ENCODE measurements at regions of chr6 and their contacts with region 1.

Region 1: DNA sequence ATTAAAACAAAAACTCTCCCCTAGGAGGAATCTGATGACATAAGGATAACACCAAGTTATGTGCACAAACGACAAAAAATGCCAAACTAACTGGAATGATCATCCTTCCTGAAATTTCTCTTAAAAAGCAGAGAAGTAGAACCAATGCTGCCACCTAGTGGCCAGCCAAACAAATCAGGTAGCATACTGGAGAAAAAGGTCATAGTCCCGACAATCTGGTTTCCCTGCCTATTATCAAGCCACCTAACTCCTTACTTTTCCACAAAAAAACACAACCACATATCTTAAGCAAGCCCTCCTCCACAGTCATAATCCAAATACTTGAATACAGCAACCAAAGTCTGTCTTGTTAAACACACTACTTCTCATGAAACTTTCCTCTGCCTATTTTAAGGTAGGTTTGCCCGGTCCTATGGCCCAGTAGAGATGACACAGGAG is 5.3 kb downstream of the OARD1 start:
- DNase-seq: peak; percentile 26
- H3K4me3 Mint-ChIP-seq: no peak overlapping the region
- H3K27ac Mint-ChIP-seq: no peak overlapping the region
- H3K4me1 Mint-ChIP-seq: peaks cover 37% of the 10 kb centered on the region
- H3K27me3 Mint-ChIP-seq: no peaks in the 10 kb centered on the region

Region 2: GRCh38 chr6:41002216-41002615 is 64.7 kb before region 1 on chr6:
- intact Hi-C with region 1: loop called (anchors 1 kb)
- DNase-seq: no peak
- H3K4me3 Mint-ChIP-seq: no peak overlapping the region
- H3K27ac Mint-ChIP-seq: no peak overlapping the region
- H3K4me1 Mint-ChIP-seq: peaks cover 2% of the 10 kb centered on the region
- H3K27me3 Mint-ChIP-seq: peaks cover 44% of the 10 kb centered on the region

Region 3: DNA sequence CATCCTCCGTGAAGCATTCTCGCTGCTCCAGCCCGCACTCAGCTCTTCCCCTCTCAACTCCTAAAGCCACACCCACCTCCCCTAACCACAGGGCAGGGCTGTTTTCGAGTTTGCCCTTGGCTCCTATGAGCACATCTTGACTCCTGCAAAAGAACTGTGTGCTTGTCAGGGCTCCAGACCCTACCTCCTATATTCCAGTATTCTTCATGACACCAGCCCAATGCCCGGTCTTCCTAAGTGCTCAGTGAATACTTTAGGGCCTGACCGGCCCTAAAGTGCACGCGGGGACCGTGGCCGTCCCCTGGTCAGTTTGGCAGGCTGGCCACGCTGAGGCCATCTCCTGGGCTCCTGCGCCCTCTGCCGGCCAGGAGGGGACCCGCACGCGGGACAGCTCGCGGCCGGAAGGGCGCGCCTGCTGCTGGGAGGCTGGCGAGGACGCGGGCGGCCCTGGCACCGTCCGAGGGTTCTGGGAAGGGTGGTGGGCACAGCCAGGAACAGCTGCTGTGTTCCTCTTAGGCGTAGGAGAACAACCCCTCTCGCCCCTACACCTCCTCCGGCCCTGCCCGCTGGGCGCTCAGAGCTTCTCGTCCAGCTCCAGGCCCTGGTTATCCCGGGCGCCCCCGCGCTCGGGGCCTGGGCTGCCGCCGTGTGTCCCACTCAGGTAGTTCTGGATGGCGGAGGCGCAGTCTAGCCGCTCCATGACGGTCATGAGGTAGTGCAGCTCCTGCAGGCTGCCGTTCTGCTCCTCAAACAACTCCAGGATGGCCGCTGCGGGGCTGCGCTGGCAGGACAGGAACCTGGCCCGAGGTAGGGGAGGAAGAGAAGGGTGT is 38.9 kb before region 1 on chr6:
- intact Hi-C with region 1: loop called (anchors 1 kb)
- DNase-seq: peak; percentile 77
- H3K4me3 Mint-ChIP-seq: peak overlapping the region; percentile 89
- H3K27ac Mint-ChIP-seq: peak overlapping the region; percentile 94
- H3K4me1 Mint-ChIP-seq: peaks cover 19% of the 10 kb centered on the region
- H3K27me3 Mint-ChIP-seq: no peaks in the 10 kb centered on the region

Region 4: DNA sequence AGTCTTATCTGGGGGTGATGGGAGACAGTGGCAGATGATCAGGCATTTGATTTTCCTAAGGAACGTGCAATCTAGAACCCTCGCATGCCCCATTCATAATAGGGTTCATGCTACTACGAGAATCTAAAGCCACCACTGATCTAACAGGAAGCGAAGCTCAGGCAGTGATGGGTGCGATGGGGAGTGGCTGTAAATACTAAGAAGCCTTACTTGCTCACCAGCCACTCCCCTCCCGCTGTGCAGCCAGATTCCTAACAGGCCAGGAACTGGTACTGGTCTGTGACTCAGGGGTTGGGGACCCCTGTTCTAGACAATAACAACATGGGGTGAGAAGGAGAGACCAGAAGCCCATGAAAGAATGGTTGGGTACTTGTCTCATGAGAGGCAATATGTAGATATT is 165.8 kb after region 1 on chr6:
- intact Hi-C with region 1: no loop called
- DNase-seq: no peak
- H3K4me3 Mint-ChIP-seq: no peak overlapping the region
- H3K27ac Mint-ChIP-seq: no peak overlapping the region
- H3K4me1 Mint-ChIP-seq: no peaks in the 10 kb centered on the region
- H3K27me3 Mint-ChIP-seq: peaks cover 29% of the 10 kb centered on the region

Region 5: DNA sequence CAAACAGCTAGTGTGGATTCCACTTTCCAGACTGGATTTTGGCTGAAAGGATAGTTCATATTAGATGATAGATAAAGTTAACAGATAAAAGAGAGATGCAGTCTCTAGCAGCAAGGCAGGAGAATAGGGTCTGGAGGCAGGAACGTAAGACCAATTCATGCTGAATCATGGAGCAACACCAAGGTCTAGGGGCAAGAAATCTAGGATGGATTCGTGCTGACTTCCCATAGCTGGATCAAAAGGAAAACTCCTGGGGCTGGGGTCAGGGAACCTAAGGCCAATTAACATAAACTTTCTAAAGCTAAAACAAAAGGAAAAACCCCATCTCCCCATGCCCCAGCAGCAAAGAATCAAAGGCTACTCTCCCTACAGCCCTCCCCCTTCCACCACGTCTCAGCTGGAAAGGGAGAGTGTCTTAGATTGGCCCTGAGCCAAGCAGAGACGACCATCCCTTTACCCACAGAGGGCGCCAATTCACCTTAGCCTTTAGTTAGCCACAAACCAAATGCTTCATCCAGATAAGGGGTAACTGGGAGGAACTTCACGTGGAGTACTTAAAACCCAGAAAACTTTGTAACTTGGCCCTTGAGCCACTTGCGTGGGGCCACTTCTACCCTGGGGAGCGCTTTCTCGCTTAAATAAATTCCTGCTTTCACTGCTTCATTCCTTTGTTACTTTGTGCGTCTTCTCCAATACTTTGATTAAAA is 212.0 kb after region 1 on chr6:
- intact Hi-C with region 1: no loop called
- DNase-seq: peak; percentile 54
- H3K4me3 Mint-ChIP-seq: no peak overlapping the region
- H3K27ac Mint-ChIP-seq: no peak overlapping the region
- H3K4me1 Mint-ChIP-seq: peaks cover 6% of the 10 kb centered on the region
- H3K27me3 Mint-ChIP-seq: peaks cover 18% of the 10 kb centered on the region